ENCODE measurements at regions of chr5 and their contacts with region 1.

Region 1: DNA sequence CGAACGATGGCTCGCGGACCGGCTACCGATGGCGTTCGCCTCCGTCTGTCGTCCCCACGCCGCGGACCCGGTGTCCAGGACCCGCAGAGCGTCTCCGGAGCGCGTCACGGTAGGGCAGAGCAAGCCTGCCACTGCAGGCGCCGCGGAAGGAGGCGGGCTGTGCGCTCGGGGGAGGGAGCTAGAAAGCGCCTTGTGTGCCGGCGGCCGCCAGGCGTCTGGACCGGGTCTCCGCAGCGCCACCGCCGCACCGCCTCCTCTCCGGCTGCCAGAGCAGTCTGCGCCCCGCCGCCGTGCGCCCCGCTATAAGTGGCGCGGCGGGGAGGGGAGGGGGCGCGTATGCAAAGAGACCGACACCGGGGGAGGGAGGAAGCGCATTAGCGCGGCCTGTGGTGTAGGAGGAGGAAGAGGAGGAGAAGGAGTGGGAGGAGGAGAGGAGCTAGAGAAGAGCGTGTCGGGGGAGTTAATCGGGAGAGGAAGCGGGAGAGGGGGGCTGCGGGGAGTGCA is at the start of gene ENC1:
- DNase-seq: peak; percentile 82 to 84
- H3K4me3 ChIP-seq: peak within 1 kb of the TSS; percentile 54 to 74 (median 73)
- H3K27ac ChIP-seq: peak within 1 kb of the TSS; percentile 58 to 69 (median 65)
- H3K4me1 ChIP-seq: peaks cover 0 to 28% of the 10 kb centered on the region in 2 donors
- H3K27me3 ChIP-seq: no peaks in the 10 kb centered on the region
- CTCF ChIP-seq: peak in 5 of 6 experiments; percentile 24 to 63 (median 58)
- POLR2A ChIP-seq: peak in 1 of 2 donors; percentile 71
- total RNA-seq, gene ENC1: 3.4 to 7.8 (median 4.5) TPM

Region 2: DNA sequence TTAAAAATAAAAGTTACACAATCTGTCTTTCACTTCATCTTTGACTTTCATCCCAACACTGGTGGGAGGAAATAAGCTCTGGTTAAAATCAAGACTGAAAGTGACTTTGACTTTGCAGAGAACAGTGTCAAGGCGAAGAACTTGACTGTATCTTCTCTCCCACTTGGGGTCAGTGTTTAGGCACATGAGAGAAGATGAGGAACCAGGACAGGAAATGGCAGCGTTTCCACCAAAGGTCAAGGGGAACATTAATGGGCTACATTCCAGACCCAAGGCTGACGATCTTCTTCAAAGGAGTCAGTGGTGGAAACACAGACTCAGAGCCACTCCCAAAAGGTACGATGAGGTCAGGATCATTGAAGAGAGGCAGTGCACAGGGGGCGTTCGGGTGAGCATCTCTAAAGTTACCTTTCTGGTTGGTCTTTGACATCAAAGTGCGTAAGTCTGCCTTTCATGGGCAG is 605.0 kb before region 1 on chr5:
- intact Hi-C with region 1: loop called (anchors 10 kb)
- DNase-seq: peak; percentile 24 to 25
- H3K4me3 ChIP-seq: no peak overlapping the region
- H3K27ac ChIP-seq: no peak overlapping the region
- H3K4me1 ChIP-seq: peaks cover 11 to 19% of the 10 kb centered on the region in 2 donors
- H3K27me3 ChIP-seq: no peaks in the 10 kb centered on the region
- CTCF ChIP-seq: peak in 4 of 6 experiments; percentile 21 to 66 (median 44)
- POLR2A ChIP-seq: no peak

Region 3: GRCh38 chr5:74127381-74128320 is 512.9 kb before region 1 on chr5:
- intact Hi-C with region 1: loop called (anchors 10 kb)
- DNase-seq: peak; percentile 35 to 44
- H3K4me3 ChIP-seq: no peak overlapping the region
- H3K27ac ChIP-seq: peak overlapping the region in 1 of 3 donors; percentile 43
- H3K4me1 ChIP-seq: peaks cover 0 to 23% of the 10 kb centered on the region in 2 donors
- H3K27me3 ChIP-seq: no peaks in the 10 kb centered on the region
- CTCF ChIP-seq: peak in 5 of 6 experiments; percentile 11 to 78 (median 45)
- POLR2A ChIP-seq: no peak